Calu3 (cell line): ENCODE measurements at regions of chr13 and their contacts with region 1.

Region 1: DNA sequence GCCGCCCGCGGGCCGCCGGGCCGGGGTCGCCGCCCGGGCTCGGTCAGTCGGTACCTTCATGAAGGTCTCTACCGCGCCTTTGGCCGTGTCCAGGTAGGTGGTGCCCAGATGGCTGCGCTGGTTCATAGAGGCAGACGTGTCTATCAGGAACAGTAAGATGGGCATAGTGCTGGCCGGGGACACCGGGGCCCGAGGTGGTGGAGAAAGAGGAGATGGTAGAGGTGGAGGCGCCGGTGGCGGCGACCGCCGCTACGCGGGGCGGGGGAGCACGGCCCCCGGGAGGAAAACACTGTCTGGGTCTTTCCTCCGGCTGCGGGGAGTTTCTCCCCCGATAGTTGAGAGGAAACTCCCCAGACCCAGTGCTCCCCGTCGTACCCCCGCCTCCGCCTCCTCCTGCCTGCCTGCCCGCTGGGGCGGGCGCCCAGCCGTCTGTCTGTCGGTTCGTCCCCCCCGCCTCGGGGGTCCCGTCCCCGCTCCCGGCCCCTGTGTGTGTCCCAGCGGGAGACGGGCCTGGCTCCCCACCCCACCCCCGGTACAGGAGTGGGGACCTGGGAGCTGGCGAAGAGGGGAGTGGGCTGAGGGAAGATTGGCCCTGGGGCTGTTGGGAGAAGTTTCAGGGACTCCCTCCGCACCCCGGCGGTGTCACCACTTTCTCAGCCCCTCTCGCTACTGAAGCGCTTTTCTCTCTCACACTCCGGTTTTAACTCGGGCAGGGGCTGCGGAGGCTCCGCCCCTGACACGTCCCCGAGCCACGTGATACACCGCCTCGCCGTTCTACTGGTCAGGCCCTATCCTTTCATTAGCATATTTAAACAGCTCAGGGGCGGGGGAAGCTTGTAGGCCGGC is at the start of gene INTS6:
- DNase-seq: peak; percentile 95
- H3K4me3 Mint-ChIP-seq: peak within 1 kb of the TSS; percentile 79
- H3K27ac Mint-ChIP-seq: peak within 1 kb of the TSS; percentile 99
- H3K4me1 Mint-ChIP-seq: no peaks in the 10 kb centered on the region
- H3K27me3 Mint-ChIP-seq: no peaks in the 10 kb centered on the region
- CTCF ChIP-seq: no peak
- total RNA-seq, gene INTS6: 25.3 and 27.1 TPM in 2 replicates

Region 2: DNA sequence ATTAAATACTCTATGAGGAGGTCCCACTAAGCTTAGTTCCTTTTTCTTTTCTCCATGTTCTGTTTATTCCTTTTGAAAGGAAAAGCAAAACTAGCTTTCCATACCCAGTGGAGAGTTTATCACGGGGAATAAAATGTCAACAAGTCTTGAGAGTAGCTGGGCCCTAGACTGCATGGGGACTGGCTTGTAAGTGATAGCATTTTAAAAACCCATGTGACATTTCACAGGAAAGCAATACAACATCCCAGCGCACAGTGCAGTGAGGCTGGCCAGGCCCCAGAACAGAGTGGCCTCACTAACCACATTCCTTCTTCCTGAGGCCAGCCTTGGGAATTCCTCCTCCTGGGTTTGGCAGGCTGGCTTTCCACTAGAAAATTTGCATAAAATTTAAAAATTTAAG is 758.9 kb before region 1 on chr13:
- CTCF ChIA-PET with region 1: no interaction called
- intact Hi-C with region 1: no loop called
- DNase-seq: no peak
- H3K4me3 Mint-ChIP-seq: no peak overlapping the region
- H3K27ac Mint-ChIP-seq: no peak overlapping the region
- H3K4me1 Mint-ChIP-seq: no peaks in the 10 kb centered on the region
- H3K27me3 Mint-ChIP-seq: no peaks in the 10 kb centered on the region
- CTCF ChIP-seq: no peak

Region 3: GRCh38 chr13:51590971-51591627 is 138.5 kb after region 1 on chr13:
- CTCF ChIA-PET with region 1: no interaction called
- intact Hi-C with region 1: loop called (anchors 5 kb)
- DNase-seq: no peak
- H3K4me3 Mint-ChIP-seq: peak overlapping the region; percentile 43
- H3K27ac Mint-ChIP-seq: peak overlapping the region; percentile 33
- H3K4me1 Mint-ChIP-seq: peaks cover 13% of the 10 kb centered on the region
- H3K27me3 Mint-ChIP-seq: no peaks in the 10 kb centered on the region
- CTCF ChIP-seq: no peak

Region 4: GRCh38 chr13:51764184-51765141 is 311.9 kb after region 1 on chr13:
- CTCF ChIA-PET with region 1: interaction called, 10 read pairs
- intact Hi-C with region 1: no loop called
- DNase-seq: peak; percentile 40
- H3K4me3 Mint-ChIP-seq: peak overlapping the region; percentile 29
- H3K27ac Mint-ChIP-seq: peak overlapping the region; percentile 66
- H3K4me1 Mint-ChIP-seq: peaks cover 20% of the 10 kb centered on the region
- H3K27me3 Mint-ChIP-seq: no peaks in the 10 kb centered on the region
- CTCF ChIP-seq: no peak

Region 5: GRCh38 chr13:51803422-51804294 is 351.1 kb after region 1 on chr13 and contains the start of gene DHRS12:
- CTCF ChIA-PET with region 1: interaction called, 4 read pairs
- intact Hi-C with region 1: loop called (anchors 5 kb)
- DNase-seq: peak; percentile 80
- H3K4me3 Mint-ChIP-seq: peak within 1 kb of the TSS; percentile 68
- H3K27ac Mint-ChIP-seq: peak within 1 kb of the TSS; percentile 60
- H3K4me1 Mint-ChIP-seq: peaks cover 10% of the 10 kb centered on the region
- H3K27me3 Mint-ChIP-seq: no peaks in the 10 kb centered on the region
- CTCF ChIP-seq: no peak
- total RNA-seq, gene DHRS12: 8.1 and 8.4 TPM in 2 replicates